ENCODE measurements at regions of chr7 and their contacts with region 1.

Region 1: GRCh38 chr7:156845379-156846101 is 47.4 kb downstream of the LMBR1 start:
- DNase-seq: no peak
- ATAC-seq: no peak
- H3K4me3 ChIP-seq: no peak overlapping the region
- H3K27ac ChIP-seq: no peak overlapping the region
- H3K4me1 ChIP-seq: peaks cover 3 to 30% (median 19%) of the 10 kb centered on the region in 9 donors
- H3K27me3 ChIP-seq: no peaks in the 10 kb centered on the region
- CTCF ChIP-seq: no peak

Region 2: DNA sequence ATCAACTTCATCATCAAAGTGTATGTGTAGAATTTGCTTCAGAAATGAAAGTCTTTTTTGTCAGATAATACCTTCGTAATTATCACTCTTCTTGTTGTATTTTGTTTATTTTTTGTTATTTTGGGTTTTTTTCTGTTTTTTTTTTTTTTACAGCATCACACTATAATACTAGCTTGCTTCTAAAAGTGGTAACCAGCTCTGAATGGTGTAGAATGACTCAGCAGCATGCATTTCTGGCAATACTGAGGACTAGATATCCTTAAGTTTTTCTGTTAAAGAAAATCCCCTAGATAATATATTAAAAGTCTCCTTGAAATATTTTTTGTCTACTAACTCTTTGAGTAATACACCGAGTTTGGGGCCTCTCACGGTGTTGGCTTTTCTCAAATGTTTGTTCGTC is 61.7 kb before region 1 on chr7:
- intact Hi-C with region 1: no loop called
- DNase-seq: no peak
- ATAC-seq: no peak
- H3K4me3 ChIP-seq: no peak overlapping the region
- H3K27ac ChIP-seq: no peak overlapping the region
- H3K4me1 ChIP-seq: no peaks in the 10 kb centered on the region
- H3K27me3 ChIP-seq: no peaks in the 10 kb centered on the region
- CTCF ChIP-seq: no peak

Region 3: GRCh38 chr7:156881679-156882078 is 36.1 kb after region 1 on chr7:
- intact Hi-C with region 1: loop called in 1 of 10 experiments (anchors 5 kb)
- DNase-seq: no peak
- ATAC-seq: no peak
- H3K4me3 ChIP-seq: no peak overlapping the region
- H3K27ac ChIP-seq: no peak overlapping the region
- H3K4me1 ChIP-seq: peaks cover 0 to 19% (median 12%) of the 10 kb centered on the region in 9 donors
- H3K27me3 ChIP-seq: no peaks in the 10 kb centered on the region
- CTCF ChIP-seq: no peak

Measured in heart right ventricle (tissue), 16 donors.